ENCODE measurements at regions of chr20 and their contacts with region 1.

Region 1: DNA sequence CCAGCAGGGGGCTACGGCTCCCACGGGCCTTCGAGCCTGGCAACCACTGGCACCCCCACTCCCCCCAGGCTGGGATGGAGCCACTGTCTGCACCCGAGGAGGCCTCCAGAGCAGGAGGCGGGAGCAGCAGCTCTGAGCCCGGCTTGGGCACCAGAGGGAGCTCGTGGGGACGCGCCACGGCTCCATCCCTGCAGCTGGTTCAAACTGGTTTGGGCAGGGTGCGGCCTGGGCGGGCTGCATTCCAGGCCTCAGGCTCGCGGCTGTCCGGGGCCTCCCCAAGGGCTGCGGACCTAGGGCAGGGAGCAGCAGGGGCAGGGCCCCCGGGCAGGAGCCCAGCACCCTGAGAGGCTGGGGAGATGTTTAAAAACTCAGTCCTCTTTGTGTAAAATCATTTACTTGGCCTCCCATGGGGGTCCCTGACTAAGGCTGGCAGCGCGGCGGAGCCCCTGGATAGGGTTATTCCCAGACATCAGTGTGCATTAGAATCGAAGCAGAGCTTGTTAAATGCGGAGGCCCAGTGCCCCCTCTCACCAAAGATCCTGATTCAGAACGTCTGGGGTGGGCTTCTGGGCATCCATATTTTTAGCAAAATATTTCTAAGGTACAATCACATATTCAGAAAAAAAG is 4.1 kb upstream of the BCAS4 start:
- DNase-seq: peak; percentile 99
- H3K4me3 Mint-ChIP-seq: peak overlapping the region; percentile 48
- H3K27ac Mint-ChIP-seq: peak overlapping the region; percentile 87
- H3K4me1 Mint-ChIP-seq: peaks cover 42% of the 10 kb centered on the region
- H3K27me3 Mint-ChIP-seq: no peaks in the 10 kb centered on the region
- CTCF ChIP-seq: peak; percentile 96

Region 2: DNA sequence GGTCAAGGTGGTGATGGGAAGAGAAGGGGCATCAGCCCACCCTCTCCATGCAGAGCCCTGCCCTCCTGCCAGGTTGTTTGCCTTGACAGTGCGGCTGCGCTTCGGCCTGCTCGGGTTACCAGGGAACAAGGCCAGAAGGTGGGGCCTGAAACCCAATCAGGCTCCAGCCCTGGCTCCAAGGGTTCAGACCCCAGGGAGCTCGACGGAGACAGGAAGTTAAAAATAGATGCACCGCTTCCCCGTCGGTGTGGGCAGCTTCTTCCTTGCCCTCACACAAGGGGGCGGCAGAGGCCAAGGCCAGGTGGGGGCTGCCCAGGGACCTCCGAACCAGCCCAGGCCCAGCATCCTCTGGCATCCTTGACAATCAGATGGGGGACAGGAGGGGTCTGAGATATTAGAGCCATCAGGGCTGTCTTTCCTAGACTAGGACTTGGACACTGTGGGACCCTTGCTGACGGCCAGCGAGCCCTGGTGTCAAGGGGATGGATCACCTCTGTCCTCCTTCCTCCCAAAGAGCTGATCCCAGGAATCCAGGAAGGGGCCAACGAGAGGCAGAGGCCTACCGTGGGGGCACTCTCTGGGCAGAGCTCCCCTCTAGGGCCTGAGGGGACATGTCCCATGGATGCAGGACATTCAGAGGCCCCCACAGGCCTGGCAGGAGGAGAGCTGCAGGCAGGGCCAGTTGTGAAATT is 164.6 kb before region 1 on chr20:
- CTCF ChIA-PET with region 1: interaction called, 41 read pairs
- intact Hi-C with region 1: loop called (anchors 1 kb)
- DNase-seq: peak; percentile 91
- H3K4me3 Mint-ChIP-seq: no peak overlapping the region
- H3K27ac Mint-ChIP-seq: peak overlapping the region; percentile 72
- H3K4me1 Mint-ChIP-seq: peaks cover 44% of the 10 kb centered on the region
- H3K27me3 Mint-ChIP-seq: no peaks in the 10 kb centered on the region
- CTCF ChIP-seq: peak; percentile 97

Region 3: GRCh38 chr20:50744143-50744792 is 46.5 kb before region 1 on chr20:
- CTCF ChIA-PET with region 1: interaction called, 32 read pairs
- intact Hi-C with region 1: loop called (anchors 5 kb)
- DNase-seq: peak; percentile 73
- H3K4me3 Mint-ChIP-seq: peak overlapping the region; percentile 63
- H3K27ac Mint-ChIP-seq: peak overlapping the region; percentile 90
- H3K4me1 Mint-ChIP-seq: peaks cover 88% of the 10 kb centered on the region
- H3K27me3 Mint-ChIP-seq: no peaks in the 10 kb centered on the region
- CTCF ChIP-seq: no peak

Region 4: DNA sequence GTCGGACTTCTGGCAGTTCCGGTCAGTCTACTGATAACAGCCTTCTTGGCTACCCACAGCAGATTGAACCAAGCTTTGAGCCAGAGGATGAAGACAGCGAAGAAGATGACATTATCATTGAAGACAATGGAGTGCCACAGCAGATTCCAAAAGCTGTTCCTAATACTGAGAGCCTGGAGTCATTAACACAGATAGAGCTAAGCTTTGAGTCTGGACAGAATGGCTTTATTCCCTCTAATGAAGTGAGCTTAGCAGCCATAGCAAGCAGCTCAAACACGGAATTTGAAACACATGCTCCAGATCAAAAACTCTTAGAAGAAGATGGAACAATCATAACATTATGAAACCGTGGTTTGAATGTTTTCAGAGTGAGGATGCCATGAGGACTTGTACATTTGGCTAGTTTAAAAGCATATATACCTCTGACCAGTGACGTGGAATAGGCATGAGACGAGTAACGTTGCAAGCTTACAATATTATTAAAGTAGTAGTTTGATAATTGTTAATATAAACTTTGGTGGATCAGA is 40.6 kb before region 1 on chr20:
- CTCF ChIA-PET with region 1: interaction called, 32 read pairs
- intact Hi-C with region 1: loop called (anchors 5 kb)
- DNase-seq: no peak
- H3K4me3 Mint-ChIP-seq: peak overlapping the region; percentile 39
- H3K27ac Mint-ChIP-seq: peak overlapping the region; percentile 86
- H3K4me1 Mint-ChIP-seq: peaks cover 67% of the 10 kb centered on the region
- H3K27me3 Mint-ChIP-seq: no peaks in the 10 kb centered on the region
- CTCF ChIP-seq: no peak

Region 5: DNA sequence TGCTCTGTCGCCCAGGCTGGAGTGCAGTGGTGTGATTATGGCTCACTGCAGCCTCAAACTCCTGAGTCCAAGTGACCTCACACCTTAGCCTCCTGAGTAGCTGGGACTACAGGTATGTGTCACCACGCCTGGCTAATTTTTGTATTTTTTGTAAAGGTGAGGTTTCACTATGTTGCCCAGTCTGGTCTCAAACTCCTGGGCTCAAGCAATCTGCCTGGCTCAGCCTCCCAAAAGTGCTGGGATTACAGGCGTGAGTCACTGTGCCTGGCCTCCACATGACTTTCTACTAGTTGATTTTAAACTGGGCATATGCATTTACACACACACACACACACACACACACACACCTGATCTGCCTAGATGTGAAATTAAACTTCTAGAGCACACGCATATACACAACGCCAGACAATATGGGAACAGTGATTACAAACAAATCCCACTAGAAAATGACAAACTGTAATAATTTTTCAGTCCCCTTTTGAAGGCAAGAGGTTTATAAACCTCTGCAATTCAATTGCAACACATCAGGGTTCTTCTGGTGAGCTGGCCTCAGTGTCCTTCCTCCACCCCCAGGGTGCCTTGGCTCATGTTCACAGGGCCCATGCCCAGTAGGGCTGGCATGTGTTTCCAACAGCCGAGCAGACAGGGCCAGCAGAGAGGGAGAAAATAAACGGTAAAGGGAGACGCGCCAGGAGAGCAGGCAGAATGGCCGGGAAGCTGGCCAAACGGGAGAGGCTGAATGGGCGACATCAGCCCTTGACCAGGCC is 28.1 kb before region 1 on chr20:
- CTCF ChIA-PET with region 1: interaction called, 11 read pairs
- intact Hi-C with region 1: loop called (anchors 1 kb)
- DNase-seq: peak; percentile 73
- H3K4me3 Mint-ChIP-seq: peak overlapping the region; percentile 73
- H3K27ac Mint-ChIP-seq: peak overlapping the region; percentile 100
- H3K4me1 Mint-ChIP-seq: peaks cover 85% of the 10 kb centered on the region
- H3K27me3 Mint-ChIP-seq: no peaks in the 10 kb centered on the region
- CTCF ChIP-seq: no peak

Region 6: DNA sequence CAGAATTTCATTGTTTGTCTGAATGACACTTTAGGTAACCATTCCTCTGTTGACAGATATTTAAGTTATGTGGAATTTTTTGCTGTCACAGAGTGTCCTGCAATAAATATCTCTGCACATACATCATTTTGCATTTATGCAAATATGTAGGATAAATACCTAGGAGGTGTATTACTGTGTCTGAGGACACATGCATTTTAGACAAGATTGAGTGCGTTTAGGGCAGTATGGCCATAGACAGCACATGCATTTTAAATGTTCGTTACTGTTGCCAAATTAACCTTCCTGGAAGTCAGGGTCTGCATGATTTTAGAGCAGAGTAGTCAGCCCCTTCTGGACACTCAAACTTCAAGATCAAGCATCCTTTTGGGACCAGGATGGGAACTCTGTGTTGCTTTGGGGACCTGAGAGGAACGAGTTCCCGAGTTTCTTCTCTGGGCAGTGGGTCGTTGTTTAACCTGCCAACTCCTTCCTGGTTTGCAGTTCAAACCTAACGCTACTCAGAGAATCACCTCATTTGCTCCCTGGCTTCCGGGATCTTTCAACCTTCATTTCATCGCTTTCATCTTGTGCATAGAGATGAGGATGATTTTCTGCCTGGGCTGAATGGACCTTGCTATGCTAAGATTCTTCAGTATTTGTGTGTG is 13.8 kb after region 1 on chr20:
- CTCF ChIA-PET with region 1: no interaction called
- intact Hi-C with region 1: no loop called
- DNase-seq: no peak
- H3K4me3 Mint-ChIP-seq: no peak overlapping the region
- H3K27ac Mint-ChIP-seq: no peak overlapping the region
- H3K4me1 Mint-ChIP-seq: no peaks in the 10 kb centered on the region
- H3K27me3 Mint-ChIP-seq: no peaks in the 10 kb centered on the region
- CTCF ChIP-seq: no peak

Region 7: GRCh38 chr20:50895111-50895830 is 104.5 kb after region 1 on chr20:
- CTCF ChIA-PET with region 1: interaction called, 12 read pairs
- intact Hi-C with region 1: no loop called
- DNase-seq: no peak
- H3K4me3 Mint-ChIP-seq: no peak overlapping the region
- H3K27ac Mint-ChIP-seq: no peak overlapping the region
- H3K4me1 Mint-ChIP-seq: peaks cover 24% of the 10 kb centered on the region
- H3K27me3 Mint-ChIP-seq: no peaks in the 10 kb centered on the region
- CTCF ChIP-seq: no peak

Region 8: DNA sequence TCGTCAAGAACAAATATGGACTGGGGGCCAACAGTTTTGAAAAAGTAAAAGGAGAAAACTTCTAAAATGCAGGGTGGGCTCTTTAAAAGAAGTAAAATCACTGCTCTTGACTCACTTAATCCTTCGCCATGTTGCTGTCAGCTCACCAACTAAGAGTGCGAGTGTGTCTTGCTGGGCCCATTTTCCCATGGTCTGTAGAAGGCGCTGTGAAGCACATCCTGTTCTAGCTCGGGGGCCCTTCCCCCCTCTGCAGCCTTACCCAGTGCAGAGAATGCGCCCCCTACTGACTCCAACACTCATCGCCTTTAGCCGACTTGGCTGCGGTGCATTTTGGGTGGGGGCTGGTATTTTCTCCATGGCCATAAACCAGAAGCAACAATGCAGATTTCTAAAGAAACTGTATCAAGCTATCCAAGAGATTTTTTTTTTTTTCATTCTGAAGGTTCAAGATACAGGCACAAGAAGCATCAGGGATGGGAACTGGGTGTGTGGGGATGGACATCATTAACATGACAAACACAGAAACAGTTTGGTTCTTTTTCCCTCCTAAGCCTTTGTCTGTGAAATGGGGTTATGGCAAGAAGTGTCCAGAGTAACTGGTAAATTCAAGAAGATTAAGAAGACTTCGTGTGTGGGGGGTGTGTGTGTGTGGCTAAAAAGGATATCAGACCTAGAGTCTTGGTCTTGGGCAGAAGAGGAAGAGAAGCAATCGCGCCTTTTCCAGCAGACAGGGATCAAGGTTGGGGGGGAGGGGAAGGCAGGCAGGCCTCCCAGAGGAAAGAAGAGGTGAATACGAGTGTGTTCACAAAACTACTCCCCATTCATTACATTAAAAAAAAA is 138.8 kb after region 1 on chr20:
- CTCF ChIA-PET with region 1: interaction called, 28 read pairs
- intact Hi-C with region 1: loop called (anchors 1 kb)
- DNase-seq: peak; percentile 98
- H3K4me3 Mint-ChIP-seq: peak overlapping the region; percentile 89
- H3K27ac Mint-ChIP-seq: peak overlapping the region; percentile 96
- H3K4me1 Mint-ChIP-seq: peaks cover 43% of the 10 kb centered on the region
- H3K27me3 Mint-ChIP-seq: no peaks in the 10 kb centered on the region
- CTCF ChIP-seq: peak; percentile 98

Region 9: GRCh38 chr20:51172974-51173397 is 382.2 kb after region 1 on chr20:
- CTCF ChIA-PET with region 1: no interaction called
- intact Hi-C with region 1: no loop called
- DNase-seq: no peak
- H3K4me3 Mint-ChIP-seq: no peak overlapping the region
- H3K27ac Mint-ChIP-seq: no peak overlapping the region
- H3K4me1 Mint-ChIP-seq: no peaks in the 10 kb centered on the region
- H3K27me3 Mint-ChIP-seq: peaks cover 70% of the 10 kb centered on the region
- CTCF ChIP-seq: no peak